Right ventricle myocardium inferior (tissue), 1 donor: ENCODE measurements at regions of chr10 and their contacts with region 1.

Region 1: DNA sequence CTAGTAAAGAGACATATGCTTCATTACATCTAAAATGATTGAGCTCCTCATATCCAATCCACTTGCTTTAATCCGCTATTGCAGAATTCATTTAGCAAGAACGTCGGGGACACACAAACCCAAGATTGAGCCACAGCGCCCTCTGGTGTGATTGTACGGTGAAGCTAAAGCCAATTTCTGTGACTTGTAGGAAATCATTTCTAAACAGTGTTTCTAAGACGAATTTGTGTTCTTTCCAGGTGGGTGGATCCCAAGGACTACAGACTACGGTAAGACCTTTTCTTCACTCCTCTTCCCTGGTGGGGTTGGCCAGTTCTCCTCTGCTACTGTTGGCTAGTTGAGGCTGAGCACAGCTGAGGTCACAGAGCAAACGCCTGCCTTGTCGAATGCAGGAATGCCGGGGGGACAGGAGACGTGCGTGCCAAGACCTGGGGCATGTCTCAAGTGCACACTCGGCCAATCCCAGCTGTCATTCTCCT is 5.2 kb downstream of the DMBT1 start:
- DNase-seq: peak; percentile 85
- ATAC-seq: peak; percentile 67

Region 2: GRCh38 chr10:122279725-122280141 is 286.0 kb before region 1 on chr10:
- intact Hi-C with region 1: loop called (anchors 5 kb)
- DNase-seq: no peak
- ATAC-seq: peak; percentile 47

Region 3: GRCh38 chr10:122298598-122299301 is 267.0 kb before region 1 on chr10:
- intact Hi-C with region 1: loop called (anchors 1 kb)
- DNase-seq: peak; percentile 71
- ATAC-seq: peak; percentile 86

Region 4: DNA sequence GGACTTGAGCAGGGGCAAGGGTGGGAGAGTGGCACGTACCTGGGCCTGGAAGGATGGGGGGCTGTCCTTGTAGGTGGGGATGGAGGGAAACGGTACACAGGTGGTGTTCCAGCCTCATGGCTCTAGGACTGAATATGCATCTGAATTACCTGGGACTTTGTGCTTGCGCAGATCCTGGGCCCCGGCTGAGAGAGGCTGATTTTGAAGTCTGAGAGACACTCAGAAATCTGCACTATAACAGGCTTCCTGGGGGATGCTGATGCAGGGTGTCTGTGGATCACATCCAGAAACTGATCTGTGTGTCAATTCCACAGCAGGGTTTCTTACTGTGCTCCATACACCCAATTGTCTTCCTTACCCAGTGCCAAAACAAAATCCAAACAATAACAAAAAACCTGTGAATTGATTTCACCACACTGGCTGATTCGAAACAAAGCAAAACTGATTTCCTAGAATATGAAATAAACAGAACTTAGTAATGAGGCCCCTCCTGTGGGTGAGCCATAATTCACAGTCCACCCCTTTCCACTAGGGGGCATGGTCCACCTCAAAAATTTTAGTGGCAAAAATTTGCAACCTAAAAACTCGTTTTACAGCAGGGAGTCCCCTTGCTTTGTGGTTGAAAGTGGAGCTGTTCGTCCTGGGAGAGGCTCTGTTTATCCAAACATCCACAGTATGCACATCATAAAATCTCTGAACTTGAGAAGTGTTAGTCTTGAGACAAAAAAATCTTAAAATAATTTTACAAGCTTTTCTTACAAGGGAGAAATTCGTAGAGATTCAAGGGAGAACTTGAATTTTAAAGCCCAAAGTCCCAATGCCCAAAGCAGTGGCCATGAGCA is 223.3 kb before region 1 on chr10:
- intact Hi-C with region 1: loop called (anchors 5 kb)
- DNase-seq: no peak
- ATAC-seq: peak; percentile 40

Region 5: GRCh38 chr10:122435212-122435827 is 130.4 kb before region 1 on chr10:
- intact Hi-C with region 1: loop called (anchors 5 kb)
- DNase-seq: no peak
- ATAC-seq: peak; percentile 33

Region 6: DNA sequence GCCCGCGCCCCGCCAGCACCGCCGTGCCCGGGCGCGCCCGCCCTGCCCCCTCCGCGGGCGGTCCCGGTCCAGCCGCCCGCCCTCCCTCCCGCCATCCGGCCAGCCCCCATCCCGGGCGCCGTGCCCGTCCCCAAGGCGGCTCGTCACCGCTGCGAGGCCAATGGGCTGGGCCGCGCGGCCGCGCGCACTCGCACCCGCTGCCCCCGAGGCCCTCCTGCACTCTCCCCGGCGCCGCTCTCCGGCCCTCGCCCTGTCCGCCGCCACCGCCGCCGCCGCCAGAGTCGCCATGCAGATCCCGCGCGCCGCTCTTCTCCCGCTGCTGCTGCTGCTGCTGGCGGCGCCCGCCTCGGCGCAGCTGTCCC is 104.4 kb before region 1 on chr10 and contains the start of gene HTRA1:
- intact Hi-C with region 1: loop called (anchors 5 kb)
- DNase-seq: peak; percentile 91
- ATAC-seq: peak; percentile 83
- total RNA-seq, gene HTRA1: 41.6 TPM

Region 7: GRCh38 chr10:122703439-122704118 is 137.8 kb after region 1 on chr10:
- intact Hi-C with region 1: loop called (anchors 2 kb)
- DNase-seq: peak; percentile 74
- ATAC-seq: peak; percentile 92